ENCODE measurements at regions of chr13 and their contacts with region 1.

Region 1: GRCh38 chr13:46553886-46554858 is 1.2 kb downstream of the LRCH1 start:
- DNase-seq: peak; percentile 78
- H3K4me3 ChIP-seq: peak overlapping the region; percentile 68 to 95 (median 74)
- H3K27ac ChIP-seq: peak overlapping the region; percentile 91 to 97 (median 94)
- H3K4me1 ChIP-seq: peaks cover 3 to 45% (median 28%) of the 10 kb centered on the region in 4 donors
- H3K27me3 ChIP-seq: no peaks in the 10 kb centered on the region
- CTCF ChIP-seq: peak in 4 of 5 experiments; percentile 30 to 35 (median 33)
- EP300 ChIP-seq: no peak
- POLR2A ChIP-seq: peak; percentile 64

Region 2: DNA sequence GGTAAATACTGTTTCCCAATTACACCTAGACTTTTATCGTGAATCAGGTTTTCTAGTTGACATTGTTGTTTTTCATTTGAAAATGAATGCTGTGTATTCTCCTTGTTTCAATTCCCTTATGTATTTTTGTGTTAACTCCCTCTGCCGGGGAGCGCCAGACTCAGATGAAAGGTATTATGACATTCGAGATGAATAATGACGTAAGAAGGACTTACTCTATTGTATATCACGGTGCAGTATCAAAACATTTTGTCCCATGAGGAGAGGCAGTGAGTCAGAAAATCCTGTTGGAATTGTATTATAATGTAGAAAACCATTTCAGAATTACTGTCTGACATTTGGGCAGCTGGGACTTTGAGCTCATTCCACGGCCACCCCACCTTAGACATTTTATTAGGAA is 60.4 kb after region 1 on chr13:
- in situ Hi-C with region 1: no loop called
- intact Hi-C with region 1: loop called (anchors 10 kb)
- DNase-seq: no peak
- H3K4me3 ChIP-seq: no peak overlapping the region
- H3K27ac ChIP-seq: peak overlapping the region; percentile 77 to 84 (median 80)
- H3K4me1 ChIP-seq: peaks cover 12 to 56% (median 17%) of the 10 kb centered on the region in 4 donors
- H3K27me3 ChIP-seq: no peaks in the 10 kb centered on the region
- CTCF ChIP-seq: no peak
- EP300 ChIP-seq: no peak
- POLR2A ChIP-seq: no peak

Region 3: DNA sequence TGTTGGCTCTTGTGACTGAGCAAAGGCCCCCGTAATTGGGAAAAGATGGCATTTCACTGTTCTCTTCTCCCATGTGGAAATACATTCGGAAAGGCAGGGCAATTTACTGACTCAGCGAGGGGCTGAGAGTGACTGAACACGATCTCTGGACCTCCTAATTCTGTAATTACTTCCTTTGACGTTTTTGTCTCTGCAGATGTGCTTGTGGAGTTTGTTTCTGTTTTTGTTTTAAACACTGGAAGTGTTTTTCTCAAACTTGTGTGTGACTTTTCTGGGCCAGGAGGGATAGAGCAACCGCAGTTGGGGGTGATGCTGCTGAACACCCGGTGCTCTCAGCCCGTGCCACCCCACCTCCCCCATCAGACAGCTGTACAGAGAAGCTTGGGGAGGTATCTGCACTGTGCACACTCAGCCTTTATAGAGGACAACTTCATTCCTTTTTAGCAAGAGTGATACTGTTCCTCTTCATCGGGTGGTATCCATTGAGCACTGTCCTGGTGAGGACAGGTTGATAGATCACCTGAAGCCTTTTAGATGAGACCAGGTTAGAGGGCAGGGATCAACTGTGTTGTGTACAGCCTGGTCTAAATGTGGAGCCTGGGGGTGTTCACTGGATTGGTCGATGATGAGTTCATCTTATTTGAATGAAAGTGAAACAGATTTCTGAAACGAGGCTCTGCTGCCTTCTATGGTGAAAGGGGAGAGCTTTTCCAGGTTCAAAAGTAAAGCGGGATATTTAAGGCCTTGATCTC is 125.4 kb after region 1 on chr13:
- in situ Hi-C with region 1: no loop called
- intact Hi-C with region 1: loop called (anchors 10 kb)
- DNase-seq: peak; percentile 42
- H3K4me3 ChIP-seq: peak overlapping the region in 2 of 4 donors; percentile 4 to 31
- H3K27ac ChIP-seq: peak overlapping the region; percentile 73 to 80 (median 78)
- H3K4me1 ChIP-seq: peaks cover 11 to 55% (median 15%) of the 10 kb centered on the region in 4 donors
- H3K27me3 ChIP-seq: no peaks in the 10 kb centered on the region
- CTCF ChIP-seq: no peak
- EP300 ChIP-seq: no peak
- POLR2A ChIP-seq: no peak

Region 4: DNA sequence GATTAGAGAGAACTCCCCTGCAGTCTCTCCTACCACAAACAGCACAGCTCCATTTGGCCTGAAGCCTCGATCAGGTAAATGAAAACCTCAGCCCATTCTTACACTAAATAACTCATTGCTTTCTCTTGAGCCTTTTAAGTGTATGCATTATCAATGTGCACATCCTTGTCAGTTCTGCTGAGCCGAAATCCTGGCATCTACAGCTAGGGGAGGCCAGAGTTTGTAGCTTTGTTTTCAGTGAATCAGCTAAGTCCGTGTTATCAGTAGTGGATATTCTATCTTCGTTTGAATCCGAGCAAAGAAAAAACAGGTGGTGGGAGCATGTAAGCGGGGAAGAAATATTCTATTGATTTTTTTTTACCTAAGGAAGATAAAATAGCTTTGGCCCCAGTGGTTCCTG is 158.4 kb after region 1 on chr13:
- in situ Hi-C with region 1: loop called in 2 of 4 experiments (anchors 5 to 10 kb)
- intact Hi-C with region 1: no loop called
- DNase-seq: no peak
- H3K4me3 ChIP-seq: no peak overlapping the region
- H3K27ac ChIP-seq: no peak overlapping the region
- H3K4me1 ChIP-seq: no peaks in the 10 kb centered on the region
- H3K27me3 ChIP-seq: no peaks in the 10 kb centered on the region
- CTCF ChIP-seq: no peak
- EP300 ChIP-seq: no peak
- POLR2A ChIP-seq: no peak

Region 5: GRCh38 chr13:46721054-46721453 is 166.9 kb after region 1 on chr13:
- in situ Hi-C with region 1: loop called in 3 of 4 experiments (anchors 10 kb)
- intact Hi-C with region 1: loop called (anchors 1 kb)
- DNase-seq: peak; percentile 39
- H3K4me3 ChIP-seq: no peak overlapping the region
- H3K27ac ChIP-seq: no peak overlapping the region
- H3K4me1 ChIP-seq: peaks cover 0 to 5% (median 0%) of the 10 kb centered on the region in 4 donors
- H3K27me3 ChIP-seq: no peaks in the 10 kb centered on the region
- CTCF ChIP-seq: peak; percentile 64 to 82 (median 68)
- EP300 ChIP-seq: no peak
- POLR2A ChIP-seq: no peak

Measured in transverse colon (tissue), 4 donors.